ENCODE measurements at regions of chr2 and their contacts with region 1.

Region 1: GRCh38 chr2:27628767-27629709 is at the starts of genes CCDC121 and GPN1:
- DNase-seq: peak; percentile 84 to 92 (median 88)
- ATAC-seq: peak; percentile 93 to 98 (median 97)
- H3K4me3 ChIP-seq: peak within 1 kb of the TSS; percentile 66 to 95 (median 84)
- H3K27ac ChIP-seq: peak within 1 kb of the TSS in 11 of 12 donors; percentile 50 to 86 (median 77)
- H3K4me1 ChIP-seq: peaks cover 0 to 39% (median 21%) of the 10 kb centered on the region in 12 donors
- H3K27me3 ChIP-seq: no peaks in the 10 kb centered on the region
- CTCF ChIP-seq: no peak
- POLR2A ChIP-seq: peak in 1 of 2 donors; percentile 54
- total RNA-seq, gene CCDC121: 3.9 to 7.7 (median 5.8) TPM
- total RNA-seq, gene GPN1: 14.4 to 22.3 (median 19.4) TPM

Region 2: DNA sequence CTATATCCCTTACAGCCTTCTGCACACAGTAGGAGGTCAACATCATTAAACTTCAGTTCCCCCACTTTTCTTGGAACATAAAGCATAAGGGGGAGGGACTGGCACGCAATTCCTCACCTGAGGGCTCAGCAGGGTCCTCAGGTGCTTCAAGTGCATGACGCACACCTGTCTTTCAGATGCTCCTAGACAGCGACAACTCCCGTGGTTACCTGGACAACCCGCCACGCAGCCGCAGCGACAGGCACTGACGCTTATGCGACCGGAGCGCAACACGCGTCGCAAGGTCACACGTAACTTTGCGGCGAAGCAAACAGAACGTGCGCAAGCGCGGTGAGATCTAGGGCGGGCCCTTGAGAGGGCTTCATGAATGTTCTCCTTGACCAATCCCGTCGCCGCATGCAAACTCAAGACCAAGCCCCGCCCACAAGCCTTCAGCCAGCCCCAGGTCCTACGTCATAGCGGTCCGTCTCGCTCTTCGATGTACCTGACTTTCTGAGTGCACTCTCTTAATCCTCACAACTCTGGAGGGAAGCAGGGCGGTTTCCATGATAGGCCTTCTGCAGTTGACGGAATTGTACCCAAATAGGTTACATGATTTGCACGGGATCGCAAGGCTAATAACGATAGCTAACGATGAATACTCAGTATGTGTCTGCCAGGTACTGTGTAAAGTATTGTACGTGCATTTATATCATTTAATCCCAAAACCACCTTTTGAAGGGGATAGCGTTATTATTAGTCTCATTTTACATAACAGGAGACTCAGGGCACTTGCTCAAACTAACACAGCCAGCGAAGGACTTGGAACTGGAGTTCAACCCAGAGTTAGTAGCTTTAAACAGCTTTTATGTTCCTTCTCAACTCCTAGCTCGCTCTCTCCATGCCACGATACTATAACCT is 139.3 kb before region 1 on chr2 and contains the start of gene IFT172:
- intact Hi-C with region 1: loop called in 5 of 10 experiments (anchors 2 to 10 kb)
- DNase-seq: peak; percentile 98 to 99 (median 99)
- ATAC-seq: peak; percentile 98 to 100 (median 98)
- H3K4me3 ChIP-seq: peak within 1 kb of the TSS; percentile 28 to 80 (median 70)
- H3K27ac ChIP-seq: peak within 1 kb of the TSS in 11 of 12 donors; percentile 44 to 83 (median 66)
- H3K4me1 ChIP-seq: peaks cover 0 to 25% (median 16%) of the 10 kb centered on the region in 12 donors
- H3K27me3 ChIP-seq: peaks cover 0 to 11% (median 0%) of the 10 kb centered on the region in 9 donors
- CTCF ChIP-seq: no peak
- POLR2A ChIP-seq: peak in 1 of 2 donors; percentile 60
- total RNA-seq, gene IFT172: 13.6 to 25.7 (median 17.4) TPM

Measured in heart left ventricle (tissue), 16 donors.